ENCODE measurements at regions of chr9 and their contacts with region 1.

Region 1: GRCh38 chr9:32378993-32379729 is 5.3 kb upstream of the ACO1 start:
- DNase-seq: peak; percentile 85
- H3K4me3 ChIP-seq: peak overlapping the region; percentile 29
- H3K27ac ChIP-seq: no peak overlapping the region
- H3K4me1 ChIP-seq: peaks cover 27% of the 10 kb centered on the region
- CTCF ChIP-seq: peak; percentile 89

Region 2: GRCh38 chr9:32524892-32525708 is 145.9 kb after region 1 on chr9:
- CTCF ChIA-PET with region 1: interaction called, 4 read pairs
- POLR2A ChIA-PET with region 1: interaction called, 3 read pairs
- intact Hi-C with region 1: loop called (anchors 2 kb)
- DNase-seq: no peak
- H3K4me3 ChIP-seq: peak overlapping the region; percentile 70
- H3K27ac ChIP-seq: no peak overlapping the region
- H3K4me1 ChIP-seq: peaks cover 15% of the 10 kb centered on the region
- CTCF ChIP-seq: no peak

Region 3: GRCh38 chr9:32579706-32580331 is 200.7 kb after region 1 on chr9:
- CTCF ChIA-PET with region 1: interaction called, 58 read pairs
- POLR2A ChIA-PET with region 1: interaction called, 16 read pairs
- intact Hi-C with region 1: loop called (anchors 1 kb)
- DNase-seq: peak; percentile 77
- H3K4me3 ChIP-seq: no peak overlapping the region
- H3K27ac ChIP-seq: peak overlapping the region; percentile 7
- H3K4me1 ChIP-seq: peaks cover 43% of the 10 kb centered on the region
- CTCF ChIP-seq: peak; percentile 99

Region 4: DNA sequence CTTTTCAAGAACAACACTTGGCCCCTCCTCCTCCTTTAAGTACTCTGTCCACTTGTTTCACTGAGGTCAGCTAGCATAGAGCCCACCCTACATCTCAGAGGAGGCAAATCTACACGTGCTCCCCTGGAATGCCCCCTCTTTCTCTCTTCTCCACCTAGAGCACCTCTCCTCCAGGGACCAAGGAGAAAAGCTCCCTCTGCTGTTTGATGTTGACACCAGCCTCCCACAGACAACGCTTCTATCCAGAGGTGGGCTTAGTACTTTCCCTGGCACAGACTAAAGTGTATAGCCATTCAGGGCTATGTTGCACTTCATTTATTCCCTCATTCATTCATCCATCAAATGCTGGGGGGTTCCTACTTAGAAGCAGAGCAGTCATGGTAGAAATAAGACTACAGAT is 324.5 kb after region 1 on chr9:
- CTCF ChIA-PET with region 1: no interaction called
- POLR2A ChIA-PET with region 1: no interaction called
- intact Hi-C with region 1: loop called (anchors 10 kb)
- DNase-seq: peak; percentile 33
- H3K4me3 ChIP-seq: no peak overlapping the region
- H3K27ac ChIP-seq: no peak overlapping the region
- H3K4me1 ChIP-seq: no peaks in the 10 kb centered on the region
- CTCF ChIP-seq: peak; percentile 61

Region 5: DNA sequence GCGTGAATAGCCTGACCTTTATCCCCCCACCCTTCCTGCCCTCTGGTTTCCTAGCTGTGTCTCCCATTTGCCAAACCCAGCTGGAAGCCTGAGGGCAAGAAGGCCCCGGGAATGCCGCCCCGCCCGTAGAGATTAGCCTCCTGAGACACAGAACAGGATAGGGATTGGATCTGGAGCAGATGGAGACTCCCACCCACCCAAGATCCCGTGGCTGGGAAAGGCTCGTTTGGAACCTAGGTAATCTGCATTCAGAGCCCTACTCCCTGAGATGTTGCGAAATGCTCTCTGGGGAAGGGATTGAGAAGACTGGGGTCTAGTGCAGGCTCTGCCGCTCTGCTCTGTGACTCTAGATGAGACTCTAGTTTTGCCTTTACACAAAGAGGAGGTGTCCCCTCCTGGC is 1057.3 kb after region 1 on chr9:
- CTCF ChIA-PET with region 1: no interaction called
- POLR2A ChIA-PET with region 1: no interaction called
- intact Hi-C with region 1: no loop called
- DNase-seq: no peak
- H3K4me3 ChIP-seq: no peak overlapping the region
- H3K27ac ChIP-seq: no peak overlapping the region
- H3K4me1 ChIP-seq: peaks cover 4% of the 10 kb centered on the region
- CTCF ChIP-seq: no peak

Measured in OCI-LY7 (cell line).